ENCODE measurements at regions of chr10 and their contacts with region 1.

Region 1: DNA sequence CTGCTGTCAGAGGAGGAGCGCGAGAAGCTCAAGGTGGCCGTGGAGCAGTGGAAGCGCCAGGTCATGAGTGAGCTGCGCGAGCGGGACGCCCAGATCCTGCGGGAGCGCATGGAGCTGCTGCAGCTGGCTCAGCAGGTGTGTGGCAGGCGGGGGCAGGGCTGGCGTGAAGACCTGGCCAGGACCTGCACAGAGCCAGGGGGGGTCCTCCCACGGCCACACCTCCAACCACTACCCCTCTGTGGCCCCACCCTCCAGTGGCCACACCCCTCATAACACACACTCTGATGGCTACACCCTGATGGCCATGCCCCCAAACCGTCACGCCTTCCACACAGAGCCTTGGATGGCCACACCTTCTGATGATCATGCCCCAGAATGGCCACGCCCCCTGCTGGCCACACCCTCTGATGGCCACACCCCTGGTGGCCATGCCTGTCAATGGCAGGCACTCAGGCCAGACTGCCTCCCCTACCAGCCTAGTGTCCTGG is 23.4 kb upstream of the DPYSL4 start:
- DNase-seq: peak in 4 of 9 donors; percentile 25 to 70 (median 43)
- ATAC-seq: peak; percentile 55
- H3K4me3 ChIP-seq: no peak overlapping the region
- H3K4me3 Mint-ChIP-seq: peak overlapping the region in 2 of 10 donors; percentile 30 to 64
- H3K27ac ChIP-seq: peak overlapping the region; percentile 80
- H3K27ac Mint-ChIP-seq: peak overlapping the region in 8 of 9 donors; percentile 28 to 86 (median 73)
- H3K4me1 ChIP-seq: peaks cover 23 to 33% of the 10 kb centered on the region in 2 donors
- H3K4me1 Mint-ChIP-seq: peaks cover 16 to 54% (median 43%) of the 10 kb centered on the region in 7 donors
- H3K27me3 ChIP-seq: no peaks in the 10 kb centered on the region
- H3K27me3 Mint-ChIP-seq: no peaks in the 10 kb centered on the region

Region 2: GRCh38 chr10:132185601-132186487 is 22.5 kb after region 1 on chr10:
- CTCF ChIA-PET with region 1: no interaction called
- POLR2A ChIA-PET with region 1: interaction called, 5 read pairs
- intact Hi-C with region 1: loop called (anchors 1 kb)
- DNase-seq: peak; percentile 53 to 79 (median 66)
- ATAC-seq: peak; percentile 92
- H3K4me3 ChIP-seq: peak overlapping the region; percentile 27
- H3K4me3 Mint-ChIP-seq: peak overlapping the region; percentile 16 to 84 (median 63)
- H3K27ac ChIP-seq: peak overlapping the region; percentile 55
- H3K27ac Mint-ChIP-seq: peak overlapping the region in 3 of 9 donors; percentile 29 to 47 (median 41)
- H3K4me1 ChIP-seq: peaks cover 0 to 7% of the 10 kb centered on the region in 2 donors
- H3K4me1 Mint-ChIP-seq: peaks cover 3 to 28% (median 17%) of the 10 kb centered on the region in 7 donors
- H3K27me3 ChIP-seq: peaks cover 0 to 10% of the 10 kb centered on the region in 2 donors
- H3K27me3 Mint-ChIP-seq: peaks cover 0 to 38% (median 31%) of the 10 kb centered on the region in 5 donors

Region 3: DNA sequence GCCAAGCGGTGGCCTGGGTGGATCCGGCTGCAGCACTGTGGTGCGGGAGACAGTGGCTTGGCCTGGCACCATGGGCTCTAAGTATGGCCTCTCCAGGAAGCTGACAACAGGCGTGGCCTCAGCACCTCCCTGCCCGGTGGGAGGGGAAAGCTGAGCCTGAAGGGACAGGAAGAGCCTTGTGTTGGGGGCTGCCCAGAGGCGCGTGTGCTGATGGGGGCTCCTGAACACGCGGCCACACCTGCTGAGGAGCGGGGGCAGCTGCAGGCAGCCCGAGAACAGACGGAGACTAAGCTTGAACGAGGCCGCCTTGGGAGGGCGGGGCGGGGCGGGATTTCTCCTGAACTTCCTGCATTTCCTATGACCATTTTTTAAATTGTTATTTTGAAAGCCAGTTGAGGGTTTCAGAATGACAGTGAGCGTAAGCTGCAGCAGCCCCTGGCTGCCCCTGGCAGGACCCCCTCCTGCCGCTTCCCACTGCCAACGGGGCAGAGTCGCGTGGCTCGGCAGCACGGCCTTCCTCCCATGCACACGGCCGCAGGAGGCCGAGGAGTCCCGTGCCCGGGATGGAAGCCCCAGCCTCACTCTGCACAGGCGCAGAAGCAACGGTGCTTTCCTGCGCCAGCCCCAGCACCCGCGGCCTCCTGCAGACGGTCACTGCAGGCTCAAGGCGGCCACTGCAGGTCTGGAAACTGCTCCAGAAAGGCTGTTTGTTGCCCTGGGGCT is 66.7 kb after region 1 on chr10:
- CTCF ChIA-PET with region 1: no interaction called
- POLR2A ChIA-PET with region 1: no interaction called
- intact Hi-C with region 1: no loop called
- DNase-seq: peak in 7 of 9 donors; percentile 8 to 41 (median 35)
- ATAC-seq: peak; percentile 52
- H3K4me3 ChIP-seq: peak overlapping the region; percentile 44
- H3K4me3 Mint-ChIP-seq: peak overlapping the region; percentile 76 to 90 (median 86)
- H3K27ac ChIP-seq: peak overlapping the region; percentile 57
- H3K27ac Mint-ChIP-seq: peak overlapping the region; percentile 85 to 96 (median 92)
- H3K4me1 ChIP-seq: peaks cover 0 to 10% of the 10 kb centered on the region in 2 donors
- H3K4me1 Mint-ChIP-seq: peaks cover 22 to 51% (median 33%) of the 10 kb centered on the region in 7 donors
- H3K27me3 ChIP-seq: no peaks in the 10 kb centered on the region
- H3K27me3 Mint-ChIP-seq: no peaks in the 10 kb centered on the region

Region 4: DNA sequence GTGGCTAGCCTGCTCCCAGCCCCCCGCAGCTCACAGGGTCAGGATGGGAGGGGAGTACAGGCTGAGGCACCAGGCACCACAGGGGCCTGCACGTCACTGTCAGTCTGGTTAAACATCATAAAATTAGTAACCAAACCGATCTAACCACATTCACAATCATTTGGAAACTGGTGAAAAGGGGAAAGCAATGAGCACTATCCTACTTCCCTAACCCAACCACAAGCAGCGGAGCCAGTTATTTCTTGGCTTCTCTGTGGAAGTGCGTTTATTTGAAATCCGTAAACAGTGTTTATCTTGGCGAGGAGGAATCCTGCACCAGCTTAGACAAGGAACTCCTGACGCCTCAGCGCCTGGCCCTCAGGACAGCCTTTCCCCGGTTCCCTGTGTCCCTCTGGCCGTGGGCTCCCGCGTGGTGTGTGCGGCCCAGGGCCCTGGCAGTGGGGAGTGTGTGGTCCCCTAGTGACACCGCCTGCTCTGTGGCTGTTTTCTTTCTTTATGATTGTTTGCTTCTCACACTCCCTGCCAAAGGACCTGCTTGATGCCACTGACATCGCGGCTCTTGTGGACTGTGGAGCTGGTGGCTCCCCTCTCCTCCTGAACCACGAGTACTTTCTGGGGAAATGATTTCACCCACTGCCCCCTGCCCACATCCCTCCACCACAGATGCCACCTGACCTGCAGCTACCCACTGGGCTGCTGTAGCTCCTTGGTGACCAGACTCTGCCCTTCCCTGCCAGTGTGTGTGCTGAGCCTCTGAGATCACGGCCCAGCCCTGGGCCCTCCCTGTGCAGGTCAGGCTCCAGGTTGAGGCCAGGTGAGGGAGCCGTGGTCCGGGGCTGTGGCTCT is 412.3 kb after region 1 on chr10:
- CTCF ChIA-PET with region 1: no interaction called
- POLR2A ChIA-PET with region 1: no interaction called
- intact Hi-C with region 1: no loop called
- DNase-seq: peak in 1 of 9 donors; percentile 46
- ATAC-seq: peak; percentile 56
- H3K4me3 ChIP-seq: no peak overlapping the region
- H3K4me3 Mint-ChIP-seq: peak overlapping the region in 6 of 10 donors; percentile 14 to 56 (median 22)
- H3K27ac ChIP-seq: no peak overlapping the region
- H3K27ac Mint-ChIP-seq: peak overlapping the region in 5 of 9 donors; percentile 6 to 77 (median 62)
- H3K4me1 ChIP-seq: peaks cover 10 to 21% of the 10 kb centered on the region in 2 donors
- H3K4me1 Mint-ChIP-seq: peaks cover 24 to 49% (median 33%) of the 10 kb centered on the region in 7 donors
- H3K27me3 ChIP-seq: no peaks in the 10 kb centered on the region
- H3K27me3 Mint-ChIP-seq: peaks cover 0 to 2% (median 0%) of the 10 kb centered on the region in 5 donors